Activated CD4-positive, alpha-beta memory T cell treated with anti-CD3 and anti-CD28 coated beads for 36 hours (primary cell): ENCODE measurements at regions of chr12 and their contacts with region 1.

Region 1: DNA sequence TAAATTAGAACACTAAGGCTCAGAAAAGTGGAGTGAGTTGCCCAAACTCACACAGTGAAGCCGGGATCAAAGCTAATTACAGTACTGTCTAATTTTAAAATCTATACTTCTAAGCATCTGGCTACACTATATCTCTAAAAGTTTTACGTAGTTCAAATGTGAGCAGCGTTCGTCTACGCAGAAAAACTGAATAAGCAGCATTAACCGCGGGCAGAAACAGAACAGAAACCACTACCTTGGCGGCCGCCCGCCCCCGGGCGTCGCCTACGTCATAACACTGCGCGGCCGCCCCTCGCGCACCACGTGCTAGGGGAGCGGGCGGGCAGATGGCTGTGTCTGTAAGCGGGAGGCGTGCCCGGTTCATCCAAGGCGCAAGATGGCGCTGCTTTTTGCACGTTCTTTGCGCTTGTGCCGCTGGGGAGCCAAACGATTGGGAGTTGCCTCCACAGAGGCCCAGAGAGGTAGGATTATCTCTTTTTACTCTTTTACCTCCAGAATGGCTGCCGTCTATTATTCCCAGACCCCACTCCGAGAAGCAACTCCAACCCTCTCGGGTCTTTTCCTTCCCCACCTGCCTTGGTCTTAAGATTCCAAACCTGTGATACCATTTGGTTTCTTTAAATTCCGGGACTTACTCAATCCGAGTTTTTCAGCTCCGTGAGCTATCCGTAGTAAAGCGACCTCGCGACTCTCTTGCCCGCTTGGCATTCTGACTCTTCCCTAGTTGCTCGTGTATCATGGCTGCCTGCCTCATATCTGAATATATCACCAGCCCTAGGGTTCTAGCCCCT is at the start of gene SPRYD4:
- DNase-seq: peak; percentile 96
- H3K4me3 Mint-ChIP-seq: peak within 1 kb of the TSS; percentile 93
- H3K27ac Mint-ChIP-seq: peak within 1 kb of the TSS; percentile 96
- H3K4me1 Mint-ChIP-seq: peaks cover 31% of the 10 kb centered on the region
- H3K27me3 Mint-ChIP-seq: no peaks in the 10 kb centered on the region
- total RNA-seq, gene SPRYD4: 2.4 to 2.9 TPM

Region 2: GRCh38 chr12:56224102-56224701 is 244.2 kb before region 1 on chr12 and contains the start of gene NABP2:
- CTCF ChIA-PET with region 1: interaction called, 12 read pairs
- POLR2A ChIA-PET with region 1: no interaction called
- intact Hi-C with region 1: loop called (anchors 2 kb)
- DNase-seq: peak; percentile 97
- H3K4me3 Mint-ChIP-seq: peak within 1 kb of the TSS; percentile 96
- H3K27ac Mint-ChIP-seq: peak within 1 kb of the TSS; percentile 80
- H3K4me1 Mint-ChIP-seq: peaks cover 33% of the 10 kb centered on the region
- H3K27me3 Mint-ChIP-seq: no peaks in the 10 kb centered on the region
- total RNA-seq, gene NABP2: 62.0 to 62.2 TPM

Region 3: GRCh38 chr12:56299853-56300643 is 168.4 kb before region 1 on chr12 and contains the start of gene CS:
- CTCF ChIA-PET with region 1: interaction called, 6 read pairs
- POLR2A ChIA-PET with region 1: interaction called, 3 read pairs
- intact Hi-C with region 1: loop called (anchors 1 kb)
- DNase-seq: peak; percentile 99
- H3K4me3 Mint-ChIP-seq: peak within 1 kb of the TSS; percentile 98
- H3K27ac Mint-ChIP-seq: peak within 1 kb of the TSS; percentile 98
- H3K4me1 Mint-ChIP-seq: peaks cover 46% of the 10 kb centered on the region
- H3K27me3 Mint-ChIP-seq: no peaks in the 10 kb centered on the region
- total RNA-seq, gene CS: 304 to 309 TPM

Region 4: GRCh38 chr12:56333679-56334489 is 134.5 kb before region 1 on chr12 and contains the start of gene PAN2:
- CTCF ChIA-PET with region 1: interaction called, 8 read pairs
- POLR2A ChIA-PET with region 1: no interaction called
- intact Hi-C with region 1: loop called (anchors 1 kb)
- DNase-seq: peak; percentile 97
- H3K4me3 Mint-ChIP-seq: peak within 1 kb of the TSS; percentile 94
- H3K27ac Mint-ChIP-seq: peak within 1 kb of the TSS; percentile 99
- H3K4me1 Mint-ChIP-seq: peaks cover 43% of the 10 kb centered on the region
- H3K27me3 Mint-ChIP-seq: no peaks in the 10 kb centered on the region
- total RNA-seq, gene PAN2: 49.0 to 51.2 TPM

Region 5: GRCh38 chr12:56377310-56377988 is 91.0 kb before region 1 on chr12:
- CTCF ChIA-PET with region 1: interaction called, 12 read pairs
- POLR2A ChIA-PET with region 1: no interaction called
- intact Hi-C with region 1: loop called (anchors 1 kb)
- DNase-seq: peak; percentile 29
- H3K4me3 Mint-ChIP-seq: no peak overlapping the region
- H3K27ac Mint-ChIP-seq: no peak overlapping the region
- H3K4me1 Mint-ChIP-seq: peaks cover 3% of the 10 kb centered on the region
- H3K27me3 Mint-ChIP-seq: peaks cover 1% of the 10 kb centered on the region

Region 6: GRCh38 chr12:56448860-56449621 is 19.4 kb before region 1 on chr12 and contains the start of gene TIMELESS:
- CTCF ChIA-PET with region 1: interaction called, 39 read pairs
- POLR2A ChIA-PET with region 1: interaction called, 7 read pairs
- intact Hi-C with region 1: loop called (anchors 1 kb)
- DNase-seq: peak; percentile 92
- H3K4me3 Mint-ChIP-seq: peak within 1 kb of the TSS; percentile 88
- H3K27ac Mint-ChIP-seq: peak within 1 kb of the TSS; percentile 93
- H3K4me1 Mint-ChIP-seq: peaks cover 18% of the 10 kb centered on the region
- H3K27me3 Mint-ChIP-seq: no peaks in the 10 kb centered on the region
- total RNA-seq, gene TIMELESS: 60.1 to 62.6 TPM

Region 7: GRCh38 chr12:56987551-56988053 is 519.2 kb after region 1 on chr12:
- CTCF ChIA-PET with region 1: no interaction called
- POLR2A ChIA-PET with region 1: no interaction called
- intact Hi-C with region 1: no loop called
- DNase-seq: peak; percentile 82
- H3K4me3 Mint-ChIP-seq: no peak overlapping the region
- H3K27ac Mint-ChIP-seq: no peak overlapping the region
- H3K4me1 Mint-ChIP-seq: peaks cover 9% of the 10 kb centered on the region
- H3K27me3 Mint-ChIP-seq: no peaks in the 10 kb centered on the region

Region 8: DNA sequence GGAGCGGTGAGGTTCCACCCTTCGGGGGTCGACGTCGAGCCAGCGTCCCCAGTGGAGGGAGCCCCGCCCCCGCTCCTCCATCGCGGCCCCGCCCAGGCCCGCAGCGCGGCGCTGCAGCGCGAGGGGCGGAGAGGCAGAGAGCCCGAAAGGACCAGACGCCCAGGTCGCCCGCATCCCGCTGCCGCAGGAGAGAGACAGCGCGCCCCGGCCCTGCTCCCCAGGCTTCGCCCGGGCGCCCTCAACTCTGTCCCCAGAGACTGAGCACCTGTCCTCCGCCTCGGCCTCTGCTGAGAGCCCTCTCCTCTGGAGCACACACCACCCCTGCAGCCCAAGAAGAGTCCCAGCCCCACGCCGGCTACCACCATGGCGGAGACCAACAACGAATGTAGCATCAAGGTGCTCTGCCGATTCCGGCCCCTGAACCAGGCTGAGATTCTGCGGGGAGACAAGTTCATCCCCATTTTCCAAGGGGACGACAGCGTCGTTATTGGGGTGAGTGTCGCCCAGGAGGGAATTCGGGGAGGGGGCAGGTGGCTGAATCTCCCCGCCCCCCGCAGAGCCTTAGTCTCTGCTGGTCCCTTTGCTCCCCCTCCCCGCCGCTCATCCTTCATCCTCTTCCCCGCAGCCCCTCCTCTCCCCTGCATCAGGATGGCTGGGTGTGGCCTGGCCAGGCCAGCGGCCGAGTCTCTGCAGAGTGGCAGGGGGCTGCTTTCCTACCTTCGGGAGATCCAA is 1081.7 kb after region 1 on chr12 and contains the start of gene KIF5A:
- CTCF ChIA-PET with region 1: no interaction called
- POLR2A ChIA-PET with region 1: no interaction called
- intact Hi-C with region 1: no loop called
- DNase-seq: peak; percentile 72
- H3K4me3 Mint-ChIP-seq: peak within 1 kb of the TSS; percentile 74
- H3K27ac Mint-ChIP-seq: no peak within 1 kb of the TSS
- H3K4me1 Mint-ChIP-seq: peaks cover 35% of the 10 kb centered on the region
- H3K27me3 Mint-ChIP-seq: peaks cover 9% of the 10 kb centered on the region
- total RNA-seq, gene KIF5A: 0.90 to 0.99 TPM